PC-3 (cell line): ENCODE measurements at regions of chr13 and their contacts with region 1.

Region 1: DNA sequence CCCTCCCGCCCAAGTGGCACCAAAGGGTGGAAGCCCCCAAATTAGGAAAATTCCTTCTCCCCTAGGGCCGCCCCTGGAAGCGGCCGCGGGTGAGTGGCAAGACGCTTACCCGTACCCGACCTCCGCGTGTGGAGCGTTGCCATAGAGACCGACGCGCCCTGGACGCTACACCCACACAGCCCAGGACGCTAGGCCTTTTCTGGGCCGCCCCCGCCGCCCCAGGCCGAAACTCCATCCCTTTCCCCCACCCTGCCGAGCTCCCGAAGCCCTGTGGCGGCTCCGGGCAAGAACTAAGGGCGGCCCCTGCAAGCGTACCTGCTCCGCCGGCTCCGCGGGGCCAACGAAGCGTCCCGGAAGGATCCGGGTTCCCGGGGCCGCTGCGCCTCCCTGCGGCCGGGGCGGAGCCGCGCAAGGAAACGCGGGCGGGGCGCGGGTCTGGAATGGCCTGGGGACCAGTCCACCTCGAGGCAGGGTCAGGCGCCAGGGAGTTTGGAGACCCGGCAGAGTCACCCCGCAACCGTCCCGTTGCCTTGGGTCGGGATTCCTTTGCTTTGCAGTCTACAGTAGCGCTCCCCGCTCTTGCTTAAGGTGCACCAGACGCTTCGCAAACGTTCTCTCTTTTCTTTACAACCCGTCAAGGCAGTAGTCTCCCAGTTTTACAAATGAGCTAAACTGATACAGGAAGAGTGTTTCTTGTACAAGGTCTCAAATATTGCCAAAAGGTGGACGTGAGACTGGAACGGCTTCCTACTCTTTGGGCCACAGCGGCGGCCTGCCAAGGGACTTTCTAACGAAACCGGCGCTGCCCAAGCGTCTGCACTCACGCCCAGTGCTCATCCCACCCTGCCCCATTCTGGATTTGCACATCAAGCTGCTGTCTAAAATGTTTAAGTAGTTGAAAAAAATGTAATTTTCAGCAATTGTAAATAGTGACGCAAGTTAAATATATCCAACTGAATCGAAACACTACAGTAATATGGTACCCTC is at the start of gene NEK5:
- DNase-seq: peak; percentile 65
- ATAC-seq: peak; percentile 78
- H3K4me3 ChIP-seq: peak within 1 kb of the TSS; percentile 87
- H3K27ac ChIP-seq: no peak within 1 kb of the TSS
- H3K4me1 ChIP-seq: peaks cover 8% of the 10 kb centered on the region; the same call in 1 of the 2 replicates
- H3K27me3 ChIP-seq: no peaks in the 10 kb centered on the region
- CTCF ChIP-seq: peak; percentile 66
- total RNA-seq, gene NEK5: 0.07 TPM in 1 of 2 replicates, not detected in the other

Region 2: DNA sequence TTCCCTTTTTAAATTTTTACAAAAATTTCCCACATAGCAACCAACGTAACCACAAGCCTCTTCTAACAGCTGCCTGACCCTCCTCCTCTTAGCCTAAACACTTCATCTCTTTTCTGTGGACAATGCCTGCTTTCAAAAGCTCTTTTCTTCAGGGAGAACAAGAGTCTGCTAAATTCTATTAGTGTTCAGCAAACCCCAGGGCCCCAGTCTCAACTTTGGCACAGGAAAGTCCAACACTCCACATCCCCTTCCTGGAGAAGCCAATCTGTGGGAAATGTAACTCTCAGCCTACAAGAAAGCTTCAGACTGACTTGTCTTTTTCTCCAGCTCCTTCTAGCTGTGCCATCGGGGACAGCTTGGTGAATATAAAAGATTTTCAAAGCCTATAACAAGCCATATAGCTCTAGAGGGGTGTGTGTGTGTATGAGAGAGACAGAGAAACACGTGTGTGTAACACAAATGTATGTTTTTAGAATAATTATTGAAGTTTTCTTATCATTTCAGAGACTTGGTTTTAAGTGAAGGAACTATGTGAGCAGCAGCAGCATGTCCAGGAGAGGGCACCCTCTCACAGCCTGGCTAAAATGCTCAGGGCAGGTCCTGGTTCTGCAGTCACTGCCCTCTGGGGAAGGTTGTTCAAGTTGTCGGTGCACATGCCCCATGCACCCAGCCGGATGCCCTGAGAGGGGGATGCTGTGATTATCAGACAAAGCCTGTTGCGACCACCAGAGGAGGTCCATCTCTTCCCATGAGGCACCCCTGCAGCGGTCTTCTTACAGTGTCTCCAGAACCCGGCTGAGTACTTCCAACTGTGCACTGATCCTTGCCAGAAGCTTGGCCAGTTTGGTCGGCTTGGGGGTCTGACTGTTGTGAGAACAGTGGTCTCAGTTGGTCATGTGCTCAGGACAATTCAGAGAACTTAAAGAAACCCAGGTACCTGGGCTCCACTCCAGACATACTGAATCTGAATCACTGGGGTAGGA is 232.8 kb before region 1 on chr13:
- CTCF ChIA-PET with region 1: interaction called, 3 read pairs
- POLR2A ChIA-PET with region 1: no interaction called
- intact Hi-C with region 1: loop called (anchors 1 kb)
- DNase-seq: peak; percentile 57
- ATAC-seq: peak; percentile 96
- H3K4me3 ChIP-seq: no peak overlapping the region
- H3K27ac ChIP-seq: no peak overlapping the region
- H3K4me1 ChIP-seq: no peaks in the 10 kb centered on the region; the same call in 1 of the 2 replicates
- H3K27me3 ChIP-seq: no peaks in the 10 kb centered on the region
- CTCF ChIP-seq: peak; percentile 79

Region 3: GRCh38 chr13:51911860-51912510 is 217.0 kb before region 1 on chr13:
- CTCF ChIA-PET with region 1: no interaction called
- POLR2A ChIA-PET with region 1: no interaction called
- intact Hi-C with region 1: loop called (anchors 5 kb)
- DNase-seq: peak; percentile 52
- ATAC-seq: peak; percentile 81
- H3K4me3 ChIP-seq: peak overlapping the region; percentile 28; the same call in 1 of the 2 replicates
- H3K27ac ChIP-seq: no peak overlapping the region
- H3K4me1 ChIP-seq: peaks cover 4% of the 10 kb centered on the region; the same call in 1 of the 2 replicates
- H3K27me3 ChIP-seq: no peaks in the 10 kb centered on the region
- CTCF ChIP-seq: peak; percentile 44

Region 4: DNA sequence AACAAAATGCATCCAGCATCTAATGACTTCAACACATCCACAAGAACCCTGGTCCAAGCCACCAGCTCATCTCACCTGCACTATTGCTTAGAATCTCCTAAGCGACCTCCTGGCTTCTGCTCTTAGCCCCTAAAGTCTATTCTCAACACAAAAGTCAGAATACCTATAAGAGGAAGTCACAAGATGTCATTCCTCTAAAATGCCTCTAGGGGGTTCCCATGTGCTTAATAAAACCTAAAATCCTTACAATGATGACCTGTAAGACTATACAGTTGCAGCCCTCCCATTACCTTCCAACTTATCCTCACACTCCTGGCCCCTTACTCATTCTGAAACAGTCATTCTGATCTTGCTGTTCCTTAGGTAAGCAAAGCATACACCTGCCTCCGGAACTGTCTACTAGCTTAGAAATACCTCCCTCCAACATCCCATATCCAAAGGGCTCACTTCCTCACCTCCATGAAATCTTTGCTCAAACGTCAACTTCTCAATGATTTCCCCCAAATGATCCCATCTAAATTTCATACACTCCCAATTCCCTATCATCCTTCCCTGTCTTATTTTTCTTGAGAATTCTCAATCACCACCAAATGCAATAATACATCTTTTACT is 127.8 kb before region 1 on chr13:
- CTCF ChIA-PET with region 1: interaction called, 3 read pairs
- POLR2A ChIA-PET with region 1: no interaction called
- intact Hi-C with region 1: loop called (anchors 1 kb)
- DNase-seq: peak; percentile 50
- ATAC-seq: peak; percentile 59
- H3K4me3 ChIP-seq: no peak overlapping the region
- H3K27ac ChIP-seq: no peak overlapping the region
- H3K4me1 ChIP-seq: peaks cover 16% of the 10 kb centered on the region
- H3K27me3 ChIP-seq: no peaks in the 10 kb centered on the region
- CTCF ChIP-seq: peak; percentile 64

Region 5: GRCh38 chr13:52428295-52428694 is 299.3 kb after region 1 on chr13:
- CTCF ChIA-PET with region 1: no interaction called
- POLR2A ChIA-PET with region 1: no interaction called
- intact Hi-C with region 1: no loop called
- DNase-seq: peak; percentile 22
- ATAC-seq: peak; percentile 72
- H3K4me3 ChIP-seq: no peak overlapping the region
- H3K27ac ChIP-seq: no peak overlapping the region
- H3K4me1 ChIP-seq: no peaks in the 10 kb centered on the region; the same call in 1 of the 2 replicates
- H3K27me3 ChIP-seq: no peaks in the 10 kb centered on the region
- CTCF ChIP-seq: no peak